ENCODE measurements at regions of chr1 and their contacts with region 1.

Region 1: DNA sequence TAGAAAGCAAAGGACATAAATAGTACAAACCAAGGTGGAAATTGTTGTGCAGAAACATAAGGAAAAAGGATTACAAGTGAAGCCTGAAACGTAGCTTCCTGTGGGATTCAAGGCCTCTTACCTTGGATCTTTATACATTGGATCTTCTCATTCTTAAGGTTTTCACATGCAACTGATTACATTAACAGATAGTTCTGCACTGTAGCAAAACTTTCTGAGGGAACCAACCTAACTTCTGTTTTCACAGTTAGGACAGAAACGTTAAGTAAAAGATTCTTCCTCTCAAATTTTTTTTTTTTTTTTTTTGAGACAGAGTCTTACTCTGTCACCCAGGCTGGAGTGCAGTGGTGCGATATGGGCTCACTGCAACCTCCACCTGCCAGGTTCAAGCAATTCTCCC is 7.8 kb upstream of the TM2D1 start:
- DNase-seq: no peak
- H3K4me3 ChIP-seq: no peak overlapping the region
- H3K27ac ChIP-seq: no peak overlapping the region
- H3K4me1 ChIP-seq: no peaks in the 10 kb centered on the region
- H3K27me3 ChIP-seq: no peaks in the 10 kb centered on the region
- CTCF ChIP-seq: no peak
- POLR2A ChIP-seq: no peak

Region 2: DNA sequence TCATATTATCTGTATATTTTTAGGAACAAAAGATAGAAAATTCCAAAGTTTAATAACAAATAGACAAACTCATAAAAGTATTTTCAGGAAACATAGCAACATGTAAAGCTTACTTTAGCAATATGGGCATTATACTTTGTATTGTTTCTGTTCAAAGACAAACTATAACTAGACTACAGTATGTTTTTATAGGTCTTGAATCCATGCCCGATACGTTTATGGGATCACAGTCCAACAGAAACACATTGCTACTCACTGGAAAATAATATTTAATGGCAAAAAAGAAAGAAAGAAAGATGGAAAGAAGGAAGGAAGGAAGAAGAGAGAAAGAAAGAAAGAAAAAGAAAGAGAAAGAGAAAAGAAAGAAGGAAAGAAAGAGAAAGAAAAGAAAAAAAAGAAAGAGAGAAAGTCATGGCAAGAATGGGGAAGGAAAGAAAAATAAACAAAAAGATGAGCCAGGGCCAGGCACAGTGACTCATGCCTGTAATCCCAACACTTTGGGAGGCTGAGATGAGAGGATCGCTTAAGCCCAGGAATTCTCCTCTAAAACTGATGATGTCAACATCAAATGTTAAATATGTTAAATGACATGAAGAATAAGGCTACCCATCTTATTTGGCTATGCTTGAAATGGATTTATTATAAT is 40.4 kb before region 1 on chr1:
- CTCF ChIA-PET with region 1: no interaction called
- POLR2A ChIA-PET with region 1: no interaction called
- dilution Hi-C with region 1: no loop called
- intact Hi-C with region 1: loop called (anchors 1 kb)
- DNase-seq: peak; percentile 16
- H3K4me3 ChIP-seq: no peak overlapping the region
- H3K27ac ChIP-seq: no peak overlapping the region
- H3K4me1 ChIP-seq: no peaks in the 10 kb centered on the region
- H3K27me3 ChIP-seq: no peaks in the 10 kb centered on the region
- CTCF ChIP-seq: no peak
- POLR2A ChIP-seq: no peak

Region 3: DNA sequence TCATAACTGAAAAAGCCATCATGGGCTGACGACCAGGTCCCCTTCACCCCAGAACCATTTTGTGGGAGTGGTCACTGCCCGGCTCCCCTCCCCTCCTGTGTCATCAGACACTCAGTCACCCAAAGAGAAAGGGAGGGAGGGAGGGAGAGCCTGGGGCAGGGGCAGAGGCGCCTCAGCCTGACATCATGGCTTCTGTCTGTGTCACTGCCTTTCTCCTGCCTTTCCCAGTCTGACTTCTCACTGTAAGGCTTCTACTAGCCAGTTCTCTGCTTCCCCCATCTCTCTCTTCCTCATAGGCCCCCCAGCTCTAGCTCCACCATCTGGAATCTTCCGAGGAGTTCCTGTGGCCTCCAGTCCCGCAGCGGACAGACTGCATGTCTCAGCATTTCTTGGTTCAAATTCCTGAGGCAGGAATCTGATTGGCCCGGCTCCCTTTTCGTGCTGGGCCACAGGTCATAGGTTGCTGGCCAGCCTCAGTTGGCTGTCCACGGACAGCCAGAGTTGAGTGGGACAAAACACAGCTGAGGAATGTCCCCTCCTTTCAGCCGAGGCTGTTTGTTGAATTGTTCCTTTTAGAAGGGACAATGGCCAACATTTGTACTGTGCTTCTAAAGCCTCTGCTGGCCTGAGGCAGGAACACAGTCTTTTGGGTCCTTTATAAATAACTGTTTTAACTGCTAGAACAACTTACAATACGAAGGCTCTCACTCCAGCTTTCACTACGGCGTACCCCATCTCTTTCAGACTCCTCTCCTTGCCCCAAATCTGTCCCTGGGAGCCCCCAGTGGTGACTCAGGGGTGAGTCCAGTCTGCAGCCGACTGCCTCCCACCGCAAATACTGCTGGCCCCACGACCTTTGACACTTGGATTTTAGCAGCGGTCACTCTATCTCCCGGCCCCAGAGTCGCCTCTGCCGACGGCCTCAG is 605.2 kb after region 1 on chr1:
- CTCF ChIA-PET with region 1: no interaction called
- POLR2A ChIA-PET with region 1: no interaction called
- dilution Hi-C with region 1: no loop called
- intact Hi-C with region 1: no loop called
- DNase-seq: no peak
- H3K4me3 ChIP-seq: no peak overlapping the region
- H3K27ac ChIP-seq: no peak overlapping the region
- H3K4me1 ChIP-seq: no peaks in the 10 kb centered on the region
- H3K27me3 ChIP-seq: no peaks in the 10 kb centered on the region
- CTCF ChIP-seq: no peak
- POLR2A ChIP-seq: no peak

Measured in endothelial cell of umbilical vein (primary cell).